Adrenal gland (tissue), 19 donors: ENCODE measurements at regions of chr18 and their contacts with region 1.

Region 1: DNA sequence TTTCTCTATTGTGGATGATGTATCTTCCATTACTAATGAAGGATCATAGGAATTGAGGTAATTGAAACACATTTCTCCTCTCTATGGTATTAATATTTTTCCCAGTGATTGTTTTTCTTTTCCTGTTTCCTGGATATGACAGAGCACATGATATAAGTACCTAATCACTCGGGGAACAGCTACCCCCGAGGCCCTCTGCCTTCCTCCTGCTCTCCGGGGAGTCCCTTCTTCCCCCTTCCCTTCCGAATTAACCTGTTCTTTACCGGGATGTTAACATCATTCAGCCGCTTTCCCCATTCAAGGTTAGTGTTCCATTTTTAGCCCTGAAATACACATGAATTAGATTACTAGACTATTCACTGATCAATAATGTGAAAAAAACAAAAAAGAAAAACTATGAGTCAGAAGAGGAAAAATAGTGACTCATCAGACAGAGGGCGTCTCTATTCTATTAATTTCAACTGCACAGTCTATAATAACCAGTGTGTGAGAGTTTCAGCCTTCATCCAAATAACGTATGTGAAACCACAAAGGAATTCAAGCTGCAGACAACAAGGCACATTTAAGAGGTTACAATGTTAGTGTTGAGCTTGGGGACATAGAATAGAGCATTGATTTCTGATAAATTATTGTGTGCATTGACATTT is 450.8 kb downstream of the DLGAP1 start:
- DNase-seq: no peak
- H3K4me3 ChIP-seq: no peak overlapping the region
- H3K27ac ChIP-seq: no peak overlapping the region
- H3K4me1 ChIP-seq: peaks cover 0 to 6% of the 10 kb centered on the region in 2 donors
- H3K27me3 ChIP-seq: no peaks in the 10 kb centered on the region
- CTCF ChIP-seq: no peak
- POLR2A ChIP-seq: no peak

Region 2: DNA sequence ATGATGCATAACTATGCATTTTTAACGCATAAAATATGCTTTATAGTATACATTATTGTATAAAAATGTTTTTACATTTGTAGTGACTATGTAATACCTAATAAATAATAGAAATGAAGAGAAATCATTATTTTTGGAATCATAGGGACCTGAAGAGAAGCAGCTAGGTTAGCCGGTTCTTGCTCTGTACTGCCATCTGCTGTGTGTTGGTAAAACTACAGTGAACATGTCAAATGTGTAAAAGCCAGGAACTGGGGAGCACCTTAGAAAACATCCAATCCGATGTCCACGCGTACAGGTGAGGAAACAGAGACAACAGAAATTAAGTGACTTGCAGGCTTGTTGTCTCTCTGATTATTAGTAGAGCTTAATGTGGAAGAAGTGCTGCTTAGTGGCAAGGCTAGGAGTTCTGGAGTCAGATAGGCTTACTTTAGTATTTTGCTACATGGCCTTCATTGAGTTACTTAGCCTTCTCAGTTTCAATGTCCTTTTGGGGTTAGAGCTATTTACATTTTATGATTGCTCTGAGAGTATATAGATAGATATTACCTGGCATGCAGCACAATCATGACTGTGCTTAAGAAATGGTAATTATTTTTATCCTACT is 64.3 kb after region 1 on chr18:
- intact Hi-C with region 1: loop called in 1 of 2 experiments (anchors 10 kb)
- DNase-seq: peak; percentile 39 to 69 (median 50)
- H3K4me3 ChIP-seq: no peak overlapping the region
- H3K27ac ChIP-seq: no peak overlapping the region
- H3K4me1 ChIP-seq: no peaks in the 10 kb centered on the region
- H3K27me3 ChIP-seq: no peaks in the 10 kb centered on the region
- CTCF ChIP-seq: peak; percentile 54 to 79 (median 64)
- POLR2A ChIP-seq: no peak